ENCODE measurements at regions of chr21 and their contacts with region 1.

Region 1: DNA sequence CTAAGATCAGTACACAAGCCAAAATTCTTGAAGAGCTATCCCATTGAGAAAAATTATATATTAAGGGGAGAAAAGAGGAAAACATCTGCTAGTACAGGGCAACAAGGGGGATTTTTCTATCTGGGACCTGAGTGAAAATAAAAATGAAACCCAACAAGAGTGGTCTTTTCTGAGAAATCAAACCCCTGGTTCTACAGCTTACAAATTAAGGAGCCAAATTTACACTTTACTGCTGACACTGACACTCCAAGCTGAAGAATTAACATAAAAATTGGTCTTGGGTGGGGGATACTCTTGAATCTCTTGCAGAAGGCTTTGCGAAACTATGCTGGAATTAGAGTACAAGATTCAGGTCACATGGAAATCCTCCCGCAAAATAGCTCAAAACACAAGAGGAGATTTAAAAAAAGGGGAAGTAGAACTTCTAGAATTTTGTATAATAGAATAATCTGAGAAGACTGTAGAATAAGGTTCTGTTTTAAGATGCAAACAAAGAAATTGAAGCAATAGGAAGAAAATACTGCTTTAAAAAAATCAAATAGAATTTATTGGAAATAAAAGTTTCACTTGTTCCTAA is 32.1 kb upstream of the HSPA13 start:
- DNase-seq: no peak
- ATAC-seq: no peak
- H3K4me3 ChIP-seq: no peak overlapping the region
- H3K27ac ChIP-seq: no peak overlapping the region
- H3K4me1 ChIP-seq: no peaks in the 10 kb centered on the region
- H3K27me3 ChIP-seq: no peaks in the 10 kb centered on the region

Region 2: DNA sequence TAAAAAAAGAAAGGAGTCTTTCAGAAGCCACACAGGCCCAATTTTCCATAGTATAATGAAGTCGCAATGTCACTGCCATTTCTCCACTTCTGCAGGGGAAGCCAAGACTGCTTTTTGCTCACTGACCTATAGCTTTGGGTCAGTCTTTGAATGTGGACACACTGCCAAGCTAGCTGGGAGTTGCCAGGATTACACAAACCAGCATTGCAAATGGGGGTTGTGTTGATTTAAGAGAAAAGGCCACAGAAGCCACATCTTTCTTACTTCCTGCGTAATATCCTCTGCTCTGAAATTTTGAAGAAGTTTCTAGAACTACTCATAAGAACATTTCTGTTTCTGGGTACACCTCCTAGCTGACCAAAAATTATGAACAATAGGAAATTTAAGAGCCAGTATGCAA is 176.9 kb after region 1 on chr21:
- intact Hi-C with region 1: loop called in 1 of 2 experiments (anchors 10 kb)
- DNase-seq: peak in 1 of 2 donors; percentile 54
- ATAC-seq: no peak
- H3K4me3 ChIP-seq: no peak overlapping the region
- H3K27ac ChIP-seq: no peak overlapping the region
- H3K4me1 ChIP-seq: no peaks in the 10 kb centered on the region
- H3K27me3 ChIP-seq: no peaks in the 10 kb centered on the region

Region 3: DNA sequence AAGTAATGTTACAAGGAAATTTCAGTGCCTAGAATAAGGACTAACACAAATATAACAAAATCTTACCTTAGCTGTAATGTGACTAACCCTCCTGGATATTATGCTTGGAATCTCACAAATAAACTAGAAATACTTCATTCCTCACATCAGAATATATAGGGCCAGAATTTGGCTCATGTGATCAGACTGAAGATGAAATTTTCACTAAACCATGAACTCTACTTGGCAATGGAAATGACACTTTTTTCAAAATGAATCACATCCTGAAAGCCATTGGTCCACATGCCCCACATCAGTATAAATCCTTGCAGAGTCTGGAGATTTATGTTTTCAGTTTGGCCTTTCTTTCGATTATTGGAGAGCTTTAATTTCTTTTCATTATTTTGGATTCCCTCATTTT is 421.9 kb after region 1 on chr21:
- intact Hi-C with region 1: loop called in 1 of 2 experiments (anchors 10 kb)
- DNase-seq: no peak
- ATAC-seq: no peak
- H3K4me3 ChIP-seq: no peak overlapping the region
- H3K27ac ChIP-seq: no peak overlapping the region
- H3K4me1 ChIP-seq: no peaks in the 10 kb centered on the region
- H3K27me3 ChIP-seq: no peaks in the 10 kb centered on the region

Measured in aorta (tissue), 5 donors.